ENCODE measurements at regions of chr3 and their contacts with region 1.

Region 1: GRCh38 chr3:62622553-62623193 is 249.3 kb upstream of the FEZF2 start:
- DNase-seq: no peak
- ATAC-seq: peak; percentile 57 to 69
- H3K4me3 ChIP-seq: no peak overlapping the region
- H3K27ac ChIP-seq: no peak overlapping the region
- H3K4me1 ChIP-seq: no peaks in the 10 kb centered on the region
- H3K27me3 ChIP-seq: no peaks in the 10 kb centered on the region

Region 2: GRCh38 chr3:63228087-63229023 is 605.7 kb after region 1 on chr3:
- intact Hi-C with region 1: loop called in 1 of 4 experiments (anchors 10 kb)
- DNase-seq: no peak
- ATAC-seq: peak; percentile 42 to 48
- H3K4me3 ChIP-seq: no peak overlapping the region
- H3K27ac ChIP-seq: no peak overlapping the region
- H3K4me1 ChIP-seq: no peaks in the 10 kb centered on the region
- H3K27me3 ChIP-seq: no peaks in the 10 kb centered on the region

Measured in right cardiac atrium (tissue), 5 donors.